ENCODE measurements at regions of chr7 and their contacts with region 1.

Region 1: GRCh38 chr7:83861-84632 is 108.3 kb upstream of the FAM20C start:
- DNase-seq: peak; percentile 57

Region 2: GRCh38 chr7:117836-118647 is 34.0 kb after region 1 on chr7:
- intact Hi-C with region 1: loop called (anchors 1 kb)
- DNase-seq: no peak